Thyroid gland (tissue), 4 donors: ENCODE measurements at regions of chr3 and their contacts with region 1.

Region 1: GRCh38 chr3:112582244-112582874 is 20.5 kb downstream of the SLC35A5 start:
- DNase-seq: peak; percentile 15 to 49
- H3K4me3 ChIP-seq: no peak overlapping the region
- H3K27ac ChIP-seq: no peak overlapping the region
- H3K4me1 ChIP-seq: no peaks in the 10 kb centered on the region
- H3K27me3 ChIP-seq: no peaks in the 10 kb centered on the region
- CTCF ChIP-seq: peak; percentile 39 to 80 (median 62)
- POLR2A ChIP-seq: no peak

Region 2: DNA sequence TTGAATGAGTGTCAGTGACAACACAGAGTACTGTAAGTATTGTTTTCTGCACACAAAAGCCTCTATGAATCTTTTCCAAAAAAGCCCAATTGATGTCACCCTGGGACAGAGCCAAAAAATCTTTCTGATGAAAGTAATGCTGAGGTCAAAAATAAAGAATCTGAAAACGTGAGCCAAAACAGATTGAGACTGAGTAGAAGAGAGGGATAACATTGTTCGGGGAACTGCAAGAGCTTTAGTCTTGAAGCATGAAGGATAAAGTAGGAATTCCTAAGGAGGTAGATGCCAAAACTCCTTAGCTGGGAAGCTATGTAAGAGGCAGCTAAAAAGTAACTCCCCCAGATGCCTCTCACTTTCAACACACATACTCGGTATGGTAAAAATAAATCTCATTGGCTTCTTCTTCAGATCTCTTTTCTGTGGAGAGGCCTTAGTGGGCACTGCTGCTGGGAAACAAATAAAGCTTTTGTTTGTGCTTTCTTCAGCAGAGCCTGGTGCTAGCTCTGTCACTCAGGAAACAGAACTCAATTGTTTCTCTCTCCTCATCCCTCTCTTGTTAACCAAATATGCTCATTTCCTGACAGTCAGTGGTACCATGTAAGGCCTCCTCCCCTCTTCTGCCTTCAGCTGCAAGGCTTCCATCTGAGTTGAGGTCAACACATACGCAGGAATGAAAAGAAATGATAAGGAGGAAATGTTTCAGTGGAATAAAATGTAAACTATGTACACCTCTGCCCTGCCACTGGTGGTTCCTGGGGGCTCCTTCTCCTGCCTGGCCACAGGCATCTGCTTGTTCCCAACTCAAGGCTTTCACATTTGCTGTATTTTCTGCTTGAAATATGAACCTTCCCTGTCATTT is 191.3 kb before region 1 on chr3:
- intact Hi-C with region 1: no loop called
- DNase-seq: no peak
- H3K4me3 ChIP-seq: no peak overlapping the region
- H3K27ac ChIP-seq: peak overlapping the region in 2 of 3 donors; percentile 46 to 68
- H3K4me1 ChIP-seq: peaks cover 7 to 14% of the 10 kb centered on the region in 2 donors
- H3K27me3 ChIP-seq: no peaks in the 10 kb centered on the region
- CTCF ChIP-seq: no peak
- POLR2A ChIP-seq: no peak

Region 3: DNA sequence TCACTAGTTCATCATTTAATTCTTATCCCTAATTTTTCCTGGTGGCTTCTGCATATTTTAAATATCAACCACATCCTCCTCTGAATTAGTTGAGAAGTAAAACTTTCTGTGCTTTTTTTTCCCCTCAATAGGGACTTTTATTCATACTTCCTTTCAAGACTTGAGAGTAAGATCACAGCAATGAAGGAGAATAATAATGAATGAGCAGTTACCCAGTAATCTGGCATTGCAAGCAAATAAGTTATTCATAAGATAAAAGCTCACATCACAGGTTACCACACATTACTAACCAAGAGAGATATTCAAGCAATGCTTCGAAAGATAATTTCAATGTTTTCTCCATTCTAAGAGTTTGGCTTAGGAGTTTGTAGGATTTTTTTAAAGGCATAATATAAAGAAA is 133.4 kb before region 1 on chr3:
- intact Hi-C with region 1: no loop called
- DNase-seq: no peak
- H3K4me3 ChIP-seq: no peak overlapping the region
- H3K27ac ChIP-seq: no peak overlapping the region
- H3K4me1 ChIP-seq: peaks cover 0 to 8% of the 10 kb centered on the region in 2 donors
- H3K27me3 ChIP-seq: no peaks in the 10 kb centered on the region
- CTCF ChIP-seq: no peak
- POLR2A ChIP-seq: no peak

Region 4: DNA sequence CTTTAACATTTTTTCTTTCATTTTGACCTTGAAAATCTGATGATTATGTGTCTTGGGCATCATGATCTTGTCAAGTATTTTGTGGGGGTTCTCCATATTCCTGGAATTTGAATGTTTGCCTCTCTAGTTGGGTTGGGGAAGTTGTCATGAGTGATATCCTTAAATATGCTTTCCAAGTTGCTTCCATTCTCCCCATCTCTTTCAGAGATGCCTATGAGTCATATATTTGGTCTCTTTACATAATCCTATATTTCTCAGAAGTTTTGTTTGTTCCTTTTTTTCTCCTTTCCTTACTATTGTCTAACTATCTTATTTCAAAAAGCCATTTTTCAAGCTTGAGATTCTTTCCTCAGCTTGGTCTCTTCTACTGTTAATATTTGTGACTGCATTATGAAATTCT is 127.6 kb after region 1 on chr3:
- intact Hi-C with region 1: loop called (anchors 10 kb)
- DNase-seq: no peak
- H3K4me3 ChIP-seq: no peak overlapping the region
- H3K27ac ChIP-seq: no peak overlapping the region
- H3K4me1 ChIP-seq: no peaks in the 10 kb centered on the region
- H3K27me3 ChIP-seq: no peaks in the 10 kb centered on the region
- CTCF ChIP-seq: no peak
- POLR2A ChIP-seq: no peak

Region 5: DNA sequence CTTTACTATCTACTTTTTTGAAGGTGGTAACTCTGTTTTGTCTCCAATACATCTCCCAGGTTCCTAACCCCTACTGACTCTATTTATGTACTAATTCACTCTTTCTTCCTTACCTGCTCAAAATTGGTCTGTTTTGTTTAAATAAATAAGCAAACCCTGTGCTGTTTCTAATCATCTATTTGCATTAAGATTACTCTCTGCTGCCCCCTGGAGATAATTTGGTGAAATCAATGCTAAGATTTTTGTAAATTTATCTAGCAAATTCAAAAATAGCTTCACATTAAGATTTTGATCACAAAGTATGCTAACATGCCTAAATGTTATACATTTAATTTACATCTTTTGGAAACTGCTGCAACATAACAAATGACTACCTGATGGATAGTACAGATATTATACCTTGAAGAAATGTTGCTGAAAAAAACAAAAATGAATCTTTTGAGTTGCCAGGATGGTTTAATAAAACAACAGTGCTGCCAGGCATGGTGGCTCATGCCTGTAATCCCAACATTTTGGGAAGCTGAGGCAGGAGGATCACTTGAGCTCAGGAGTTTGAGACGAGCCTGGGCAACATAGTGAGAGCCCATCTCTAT is 397.0 kb after region 1 on chr3:
- intact Hi-C with region 1: loop called (anchors 10 kb)
- DNase-seq: no peak
- H3K4me3 ChIP-seq: no peak overlapping the region
- H3K27ac ChIP-seq: no peak overlapping the region
- H3K4me1 ChIP-seq: peaks cover 0 to under 1% of the 10 kb centered on the region in 2 donors
- H3K27me3 ChIP-seq: no peaks in the 10 kb centered on the region
- CTCF ChIP-seq: peak in 5 of 6 experiments; percentile 44 to 76 (median 64)
- POLR2A ChIP-seq: no peak